ENCODE measurements at regions of chr13 and their contacts with region 1.

Region 1: GRCh38 chr13:110412132-110412914 is 105.2 kb downstream of the COL4A2 start:
- DNase-seq: peak; percentile 66
- ATAC-seq: peak; percentile 87
- H3K4me3 ChIP-seq: no peak overlapping the region
- H3K27ac ChIP-seq: no peak overlapping the region
- H3K4me1 ChIP-seq: peaks cover 3 to 31% of the 10 kb centered on the region in 2 experiments; a peak in 3 of 4 replicates
- H3K27me3 ChIP-seq: no peaks in the 10 kb centered on the region
- CTCF ChIP-seq: peak; percentile 80 to 86 (median 85)
- POLR2A ChIP-seq: no peak
- RAD21 ChIP-seq: peak; percentile 89

Region 2: DNA sequence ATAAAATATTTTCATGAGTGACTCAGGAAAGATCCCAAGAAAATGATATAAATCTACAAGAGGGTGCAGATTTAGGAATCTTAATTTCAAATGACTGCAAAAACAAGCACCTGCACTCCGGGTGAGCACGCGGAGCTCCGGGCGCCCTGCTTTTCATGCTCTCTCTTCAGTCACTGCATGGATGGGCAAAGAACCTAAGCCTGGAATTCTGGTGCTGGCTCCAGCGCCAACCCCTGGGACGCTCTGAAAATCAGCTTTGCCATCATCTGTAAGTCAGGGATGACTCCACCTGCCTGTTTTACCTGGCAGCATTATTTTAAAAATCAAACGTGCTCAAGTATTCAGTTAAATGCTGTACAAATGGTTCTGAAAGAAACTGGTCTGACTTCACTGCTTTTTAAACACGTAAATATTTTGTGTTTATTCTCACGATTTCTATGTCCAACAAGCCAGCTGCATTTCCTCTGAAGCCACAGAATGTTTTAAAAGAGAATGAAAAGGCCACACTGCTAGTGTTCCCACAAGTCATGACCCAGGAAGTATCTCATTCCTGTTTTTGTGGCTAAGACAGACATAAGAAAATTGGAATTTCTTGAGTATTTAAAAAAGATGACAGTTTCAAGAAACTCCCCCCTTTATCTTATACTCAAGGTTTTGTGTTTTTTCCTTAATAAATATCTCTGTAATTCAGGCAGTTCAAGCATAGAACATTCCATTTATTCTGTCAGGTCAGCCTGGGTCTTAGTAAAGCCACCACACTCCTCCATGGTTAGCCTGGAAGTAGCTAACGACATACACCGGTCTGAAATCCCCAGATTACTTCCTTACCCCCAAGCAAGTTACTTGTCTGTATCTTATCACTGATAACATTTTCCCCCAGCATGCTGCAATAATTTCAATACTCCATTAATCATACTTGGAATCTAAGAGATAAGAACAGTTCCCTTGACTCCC is 186.4 kb before region 1 on chr13:
- CTCF ChIA-PET with region 1: interaction called, 3 read pairs
- POLR2A ChIA-PET with region 1: no interaction called
- RAD21 ChIA-PET with region 1: interaction called in 1 of 2 experiments, 5 read pairs
- intact Hi-C with region 1: loop called (anchors 1 kb)
- DNase-seq: no peak
- ATAC-seq: no peak
- H3K4me3 ChIP-seq: no peak overlapping the region
- H3K27ac ChIP-seq: no peak overlapping the region
- H3K4me1 ChIP-seq: peaks cover 0 to 4% of the 10 kb centered on the region in 2 experiments; a peak in 1 of 4 replicates
- H3K27me3 ChIP-seq: no peaks in the 10 kb centered on the region
- CTCF ChIP-seq: no peak
- POLR2A ChIP-seq: no peak
- RAD21 ChIP-seq: no peak

Region 3: GRCh38 chr13:110250258-110250891 is 161.9 kb before region 1 on chr13:
- CTCF ChIA-PET with region 1: interaction called, 6 read pairs
- POLR2A ChIA-PET with region 1: no interaction called
- RAD21 ChIA-PET with region 1: no interaction called
- intact Hi-C with region 1: loop called (anchors 1 kb)
- DNase-seq: no peak
- ATAC-seq: no peak
- H3K4me3 ChIP-seq: no peak overlapping the region
- H3K27ac ChIP-seq: no peak overlapping the region
- H3K4me1 ChIP-seq: no peaks in the 10 kb centered on the region
- H3K27me3 ChIP-seq: no peaks in the 10 kb centered on the region
- CTCF ChIP-seq: no peak
- POLR2A ChIP-seq: no peak
- RAD21 ChIP-seq: no peak

Region 4: GRCh38 chr13:110561344-110562035 is 149.2 kb after region 1 on chr13 and contains the start of gene RAB20:
- CTCF ChIA-PET with region 1: no interaction called
- POLR2A ChIA-PET with region 1: no interaction called
- RAD21 ChIA-PET with region 1: no interaction called
- intact Hi-C with region 1: no loop called
- DNase-seq: peak; percentile 38
- ATAC-seq: peak; percentile 82
- H3K4me3 ChIP-seq: peak within 1 kb of the TSS; percentile 67 to 82
- H3K27ac ChIP-seq: peak within 1 kb of the TSS; percentile 87
- H3K4me1 ChIP-seq: peaks cover 24 to 28% of the 10 kb centered on the region in 2 experiments
- H3K27me3 ChIP-seq: no peaks in the 10 kb centered on the region
- CTCF ChIP-seq: no peak
- POLR2A ChIP-seq: peak; percentile 45
- RAD21 ChIP-seq: no peak; the same call in 1 of the 2 replicates
- total RNA-seq, gene RAB20: 10.6 TPM